Esophagus muscularis mucosa (tissue), 4 donors: ENCODE measurements at regions of chr9 and their contacts with region 1.

Region 1: GRCh38 chr9:81848472-81848871 is 79.8 kb upstream of the SPATA31D4 start:
- DNase-seq: no peak
- H3K4me3 ChIP-seq: no peak overlapping the region
- H3K27ac ChIP-seq: peak overlapping the region in 3 of 4 donors; percentile 17 to 31 (median 23)
- H3K4me1 ChIP-seq: peaks cover 11 to 19% (median 18%) of the 10 kb centered on the region in 4 donors
- H3K27me3 ChIP-seq: no peaks in the 10 kb centered on the region
- CTCF ChIP-seq: peak in 2 of 3 experiments; percentile 47 to 56
- EP300 ChIP-seq: no peak
- POLR2A ChIP-seq: no peak

Region 2: GRCh38 chr9:81588148-81588871 is 260.2 kb before region 1 on chr9:
- intact Hi-C with region 1: loop called (anchors 10 kb)
- DNase-seq: no peak
- H3K4me3 ChIP-seq: no peak overlapping the region
- H3K27ac ChIP-seq: peak overlapping the region; percentile 71 to 83 (median 74)
- H3K4me1 ChIP-seq: peaks cover 15 to 63% (median 53%) of the 10 kb centered on the region in 4 donors
- H3K27me3 ChIP-seq: no peaks in the 10 kb centered on the region
- CTCF ChIP-seq: no peak
- EP300 ChIP-seq: no peak
- POLR2A ChIP-seq: no peak

Region 3: GRCh38 chr9:81609782-81610739 is 238.4 kb before region 1 on chr9:
- intact Hi-C with region 1: loop called (anchors 10 kb)
- DNase-seq: no peak
- H3K4me3 ChIP-seq: no peak overlapping the region
- H3K27ac ChIP-seq: peak overlapping the region; percentile 58 to 80 (median 68)
- H3K4me1 ChIP-seq: peaks cover 24 to 69% (median 54%) of the 10 kb centered on the region in 4 donors
- H3K27me3 ChIP-seq: no peaks in the 10 kb centered on the region
- CTCF ChIP-seq: peak in 1 of 3 experiments; percentile 13
- EP300 ChIP-seq: no peak
- POLR2A ChIP-seq: no peak

Region 4: GRCh38 chr9:81689343-81690190 is 158.9 kb before region 1 on chr9 and contains the start of gene TLE1:
- intact Hi-C with region 1: loop called (anchors 2 kb)
- DNase-seq: peak; percentile 100
- H3K4me3 ChIP-seq: peak within 1 kb of the TSS; percentile 73 to 92 (median 91)
- H3K27ac ChIP-seq: peak within 1 kb of the TSS; percentile 92 to 97 (median 96)
- H3K4me1 ChIP-seq: peaks cover 15 to 40% (median 32%) of the 10 kb centered on the region in 4 donors
- H3K27me3 ChIP-seq: no peaks in the 10 kb centered on the region
- CTCF ChIP-seq: no peak
- EP300 ChIP-seq: peak; percentile 33
- POLR2A ChIP-seq: peak; percentile 85
- total RNA-seq, gene TLE1: 52.3 to 125 (median 76.8) TPM

Region 5: GRCh38 chr9:82637368-82637767 is 788.9 kb after region 1 on chr9:
- intact Hi-C with region 1: no loop called
- DNase-seq: no peak
- H3K4me3 ChIP-seq: no peak overlapping the region
- H3K27ac ChIP-seq: no peak overlapping the region
- H3K4me1 ChIP-seq: no peaks in the 10 kb centered on the region
- H3K27me3 ChIP-seq: no peaks in the 10 kb centered on the region
- CTCF ChIP-seq: no peak
- EP300 ChIP-seq: no peak
- POLR2A ChIP-seq: no peak